Activated CD4-positive, alpha-beta T cell treated with anti-CD3 and anti-CD28 coated beads, Interleukin-2, amount 10 ng/mL, durations not matched to agents 7 days and 5 days (primary cell): ENCODE measurements at regions of chr4 and their contacts with region 1.

Region 1: GRCh38 chr4:25312496-25313200 is at the start of gene ZCCHC4:
- DNase-seq: peak; percentile 88
- H3K4me3 Mint-ChIP-seq: peak within 1 kb of the TSS; percentile 99
- H3K27ac Mint-ChIP-seq: peak within 1 kb of the TSS; percentile 96
- H3K4me1 Mint-ChIP-seq: peaks cover 37% of the 10 kb centered on the region
- H3K27me3 Mint-ChIP-seq: peaks cover under 1% of the 10 kb centered on the region
- total RNA-seq, gene ZCCHC4: 10.3 to 10.8 TPM

Region 2: GRCh38 chr4:25234390-25235370 is 78.0 kb before region 1 on chr4:
- CTCF ChIA-PET with region 1: interaction called, 17 read pairs
- POLR2A ChIA-PET with region 1: interaction called, 3 read pairs
- DNase-seq: peak; percentile 60
- H3K4me3 Mint-ChIP-seq: peak overlapping the region; percentile 87
- H3K27ac Mint-ChIP-seq: peak overlapping the region; percentile 94
- H3K4me1 Mint-ChIP-seq: peaks cover 45% of the 10 kb centered on the region
- H3K27me3 Mint-ChIP-seq: no peaks in the 10 kb centered on the region

Region 3: DNA sequence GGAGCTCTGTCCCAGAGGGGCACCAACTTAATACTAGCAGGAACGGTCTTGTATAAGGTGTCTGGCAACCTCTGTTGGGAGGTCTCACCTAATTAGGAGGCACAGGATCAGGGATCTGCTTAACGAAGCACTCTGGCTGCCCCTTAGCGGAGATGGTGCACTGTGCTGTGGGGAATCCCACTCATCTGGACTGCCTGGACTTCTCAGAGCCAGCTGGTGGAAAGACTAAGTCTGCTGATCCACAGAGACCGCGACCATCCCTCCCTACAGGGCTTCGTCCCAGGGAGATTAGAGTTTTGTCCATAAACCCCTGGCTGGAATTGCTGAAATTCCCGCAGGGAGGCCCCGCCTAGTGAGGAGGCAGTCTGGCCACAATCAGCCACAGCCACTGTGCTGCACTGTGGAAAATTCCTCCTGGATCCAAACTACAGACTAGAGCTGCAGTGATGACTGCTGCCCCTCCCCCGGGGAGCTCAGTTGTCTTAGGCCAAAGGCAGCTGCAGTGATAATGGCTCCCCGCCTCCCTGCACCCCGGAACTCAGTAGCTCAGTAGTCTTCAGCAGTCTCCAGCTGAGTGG is 22.1 kb before region 1 on chr4:
- CTCF ChIA-PET with region 1: interaction called, 32 read pairs
- POLR2A ChIA-PET with region 1: no interaction called
- DNase-seq: no peak
- H3K4me3 Mint-ChIP-seq: no peak overlapping the region
- H3K27ac Mint-ChIP-seq: no peak overlapping the region
- H3K4me1 Mint-ChIP-seq: no peaks in the 10 kb centered on the region
- H3K27me3 Mint-ChIP-seq: peaks cover 11% of the 10 kb centered on the region

Region 4: GRCh38 chr4:25330905-25331808 is 18.5 kb after region 1 on chr4:
- CTCF ChIA-PET with region 1: interaction called, 63 read pairs
- POLR2A ChIA-PET with region 1: no interaction called
- DNase-seq: no peak
- H3K4me3 Mint-ChIP-seq: peak overlapping the region; percentile 79
- H3K27ac Mint-ChIP-seq: peak overlapping the region; percentile 98
- H3K4me1 Mint-ChIP-seq: peaks cover 17% of the 10 kb centered on the region
- H3K27me3 Mint-ChIP-seq: no peaks in the 10 kb centered on the region

Region 5: DNA sequence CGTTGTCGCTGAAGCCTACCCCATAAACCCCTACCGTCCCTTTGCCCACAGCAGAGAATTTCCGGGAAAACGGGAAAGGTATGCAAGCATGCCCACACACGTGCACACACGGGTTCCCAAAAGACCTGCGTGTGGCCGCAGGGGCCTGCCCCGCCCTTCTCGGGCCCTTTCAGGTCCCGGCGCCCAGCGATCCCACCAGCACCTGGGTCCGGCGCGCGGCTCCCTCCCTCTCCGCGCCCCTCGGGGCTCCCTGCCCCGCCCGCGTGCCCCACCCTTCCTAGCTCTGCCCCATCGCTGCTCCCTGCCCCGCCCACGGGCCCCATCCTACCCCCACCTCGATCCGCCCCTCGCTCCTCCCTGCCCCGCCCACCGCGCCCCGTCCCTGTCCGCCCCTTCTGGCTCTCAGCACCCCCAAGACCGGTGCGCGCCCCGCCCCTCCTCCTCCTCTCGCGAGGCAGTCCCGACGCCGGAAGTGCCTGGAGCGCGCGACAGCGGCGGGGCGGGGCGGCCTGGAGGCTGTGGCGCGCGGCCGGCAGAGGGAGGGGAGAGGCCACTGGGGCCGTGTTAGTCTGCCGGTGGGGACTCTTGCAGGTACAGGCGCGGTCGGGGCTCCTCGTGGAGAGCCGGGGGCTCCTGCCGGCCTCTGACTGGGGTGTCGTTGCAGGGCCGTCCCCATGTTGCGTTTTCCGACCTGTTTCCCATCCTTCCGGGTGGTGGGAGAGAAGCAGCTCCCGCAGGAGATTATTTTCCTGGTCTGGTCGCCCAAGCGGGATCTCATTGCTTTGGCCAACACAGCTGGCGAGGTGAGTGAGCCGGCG is 64.3 kb after region 1 on chr4 and contains the start of gene ANAPC4:
- CTCF ChIA-PET with region 1: interaction called, 14 read pairs
- POLR2A ChIA-PET with region 1: no interaction called
- DNase-seq: peak; percentile 98
- H3K4me3 Mint-ChIP-seq: no peak within 1 kb of the TSS
- H3K27ac Mint-ChIP-seq: peak within 1 kb of the TSS; percentile 84
- H3K4me1 Mint-ChIP-seq: peaks cover 20% of the 10 kb centered on the region
- H3K27me3 Mint-ChIP-seq: no peaks in the 10 kb centered on the region
- total RNA-seq, gene ANAPC4: 37.5 to 47.9 TPM